Psoas muscle (tissue), 8 donors: ENCODE measurements at regions of chr15 and their contacts with region 1.

Region 1: DNA sequence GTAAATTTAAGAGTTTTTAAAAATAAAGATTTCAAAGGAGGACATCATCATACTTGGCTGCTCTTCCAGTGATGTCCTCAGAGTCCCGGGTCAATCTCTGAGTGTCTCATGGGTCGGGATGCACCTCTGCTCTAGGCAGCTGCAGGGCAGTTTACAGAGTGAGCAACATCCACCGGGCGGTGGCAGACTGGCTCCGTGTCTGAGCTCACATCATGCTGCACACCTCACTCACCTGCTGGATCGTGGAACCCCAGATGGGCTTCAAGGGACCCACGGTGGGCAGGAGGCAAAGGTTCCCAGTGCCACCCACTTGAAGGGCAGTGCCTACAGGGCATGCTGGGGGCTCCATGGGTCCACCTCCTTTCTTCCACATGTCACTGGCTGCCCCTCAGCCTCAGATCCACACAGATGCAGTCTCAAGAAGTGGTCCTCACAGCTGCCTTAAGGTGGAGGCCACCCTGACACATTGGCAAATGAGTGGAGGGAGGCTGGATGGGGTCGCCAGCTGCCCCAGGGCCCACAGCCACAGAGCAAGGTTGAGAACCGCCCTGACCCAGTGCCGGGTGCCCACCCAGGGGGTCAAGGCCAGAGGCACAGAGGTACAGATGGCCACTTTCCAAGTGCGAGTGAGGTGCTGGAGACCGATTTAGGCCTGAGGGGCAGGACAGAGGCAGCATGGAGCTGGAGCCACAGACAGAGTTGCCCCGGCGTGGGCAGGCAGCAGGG is 25.2 kb downstream of the CYFIP1 start:
- DNase-seq: peak in 1 of 2 donors; percentile 42
- ATAC-seq: no peak
- H3K4me3 ChIP-seq: no peak overlapping the region
- H3K27ac ChIP-seq: no peak overlapping the region
- H3K4me1 ChIP-seq: peaks cover 16% of the 10 kb centered on the region
- H3K27me3 ChIP-seq: no peaks in the 10 kb centered on the region
- CTCF ChIP-seq: no peak

Region 2: DNA sequence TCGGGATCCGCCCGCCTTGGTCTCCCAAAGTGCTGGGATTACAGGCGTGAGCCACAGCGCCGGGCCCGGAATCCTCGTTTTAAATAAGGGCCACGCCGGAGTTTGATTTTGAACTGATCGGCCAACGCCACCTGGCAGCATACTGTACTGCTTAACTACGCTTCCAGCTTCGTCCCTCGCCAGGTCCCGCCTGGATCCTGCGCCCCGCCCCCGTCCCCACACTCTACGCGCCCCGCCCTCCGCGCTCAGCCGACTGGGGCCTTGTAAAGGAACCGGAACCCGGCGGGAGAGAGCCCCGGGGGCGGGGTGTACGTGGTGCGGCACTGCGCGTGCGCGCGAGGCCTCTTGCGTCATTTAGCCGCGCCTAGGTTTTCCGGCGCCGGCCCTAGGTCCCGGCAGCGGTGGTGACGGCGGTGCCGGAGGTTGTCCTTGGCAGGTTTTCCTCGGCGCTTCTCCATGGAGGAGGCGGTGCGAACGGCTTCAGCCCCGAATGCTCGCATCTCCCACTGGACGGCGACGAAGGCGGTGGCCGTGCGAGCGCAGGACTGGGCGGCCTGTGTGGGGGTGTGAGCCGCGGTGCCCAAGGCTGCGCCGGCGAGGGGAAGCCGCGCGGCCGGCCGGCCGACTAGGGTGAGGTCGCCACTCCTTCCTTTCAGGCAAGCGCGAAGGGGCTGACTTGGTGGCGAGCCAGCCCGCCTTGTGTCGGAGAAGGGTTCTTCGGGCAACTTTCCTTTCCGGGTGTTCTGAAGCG is 116.5 kb before region 1 on chr15 and contains the start of gene NIPA2:
- intact Hi-C with region 1: no loop called
- DNase-seq: peak; percentile 98 to 99
- ATAC-seq: peak; percentile 98 to 99 (median 98)
- H3K4me3 ChIP-seq: peak within 1 kb of the TSS; percentile 84
- H3K27ac ChIP-seq: peak within 1 kb of the TSS; percentile 95
- H3K4me1 ChIP-seq: peaks cover 17% of the 10 kb centered on the region
- H3K27me3 ChIP-seq: no peaks in the 10 kb centered on the region
- CTCF ChIP-seq: no peak
- total RNA-seq, gene NIPA2: 18.2 to 31.5 (median 27.6) TPM

Region 3: DNA sequence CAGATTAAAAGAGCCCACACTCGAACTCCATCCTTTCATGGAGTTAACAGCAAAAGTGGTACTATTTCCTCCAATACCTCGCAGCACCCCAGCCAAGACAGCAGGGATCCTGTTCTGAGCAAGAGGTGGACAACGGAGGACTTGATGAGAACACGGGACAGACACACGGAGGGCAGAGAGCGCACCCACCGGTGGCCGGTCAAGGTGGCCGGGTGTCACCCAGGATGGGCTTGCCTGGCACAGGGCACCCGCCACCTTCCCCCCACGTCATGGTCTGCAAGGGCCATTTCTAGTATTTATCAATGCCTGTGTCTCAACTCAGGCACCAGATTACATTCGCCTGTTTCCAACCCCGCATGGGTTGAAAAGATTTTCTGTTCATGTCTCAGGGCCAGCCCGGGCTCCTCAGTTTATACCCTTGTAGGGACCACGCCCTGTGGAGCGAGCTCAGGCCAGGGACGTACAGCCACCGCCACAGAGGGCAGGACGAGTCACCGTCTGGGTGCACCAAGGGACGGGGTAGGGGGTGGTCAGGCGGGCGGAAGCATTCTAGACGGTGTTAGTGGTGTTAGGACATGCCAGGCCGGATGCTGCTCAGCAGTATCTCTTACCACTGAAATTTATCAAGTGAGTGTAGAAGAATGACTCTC is 39.0 kb before region 1 on chr15:
- intact Hi-C with region 1: loop called in 1 of 2 experiments (anchors 2 kb)
- DNase-seq: no peak
- ATAC-seq: no peak
- H3K4me3 ChIP-seq: no peak overlapping the region
- H3K27ac ChIP-seq: no peak overlapping the region
- H3K4me1 ChIP-seq: no peaks in the 10 kb centered on the region
- H3K27me3 ChIP-seq: no peaks in the 10 kb centered on the region
- CTCF ChIP-seq: no peak